Ovary (tissue), 10 donors: ENCODE measurements at regions of chr19 and their contacts with region 1.

Region 1: DNA sequence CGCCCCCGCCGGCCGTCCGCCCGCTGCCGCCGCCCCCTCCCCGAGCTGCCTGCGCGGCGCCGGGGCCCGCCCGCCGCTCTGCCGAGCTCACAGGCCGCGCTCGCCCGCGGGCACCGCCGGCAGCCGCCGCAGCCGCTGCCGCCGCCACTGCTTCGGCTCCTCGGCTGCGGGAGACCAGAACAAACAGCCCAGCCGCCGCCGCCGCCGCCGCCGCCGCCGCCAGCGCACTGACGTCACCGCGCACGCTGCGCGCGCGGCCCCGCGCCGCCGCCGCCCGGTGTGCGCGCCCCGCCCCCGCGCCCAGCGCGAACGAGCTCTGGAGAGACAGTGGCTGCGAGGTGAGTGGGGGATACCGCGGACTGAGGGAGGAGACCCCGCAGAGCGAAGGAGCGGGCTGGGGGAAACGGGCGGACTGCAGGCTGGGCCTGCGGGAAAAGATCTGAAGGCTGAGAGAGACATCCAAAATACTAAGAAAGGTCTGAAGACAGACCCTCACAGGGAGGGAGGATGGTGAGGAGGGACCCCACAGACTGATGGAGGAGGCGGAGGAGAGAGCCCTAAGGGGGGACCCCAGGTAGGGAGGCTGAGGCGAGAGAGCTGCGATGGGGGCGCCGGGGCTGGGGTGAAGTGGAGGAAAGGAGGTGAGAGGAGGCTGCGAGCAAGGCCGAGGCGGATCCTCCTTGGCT is at the start of gene BRD4:
- DNase-seq: peak; percentile 70 to 87 (median 81)
- H3K4me3 ChIP-seq: peak within 1 kb of the TSS; percentile 68
- H3K27ac ChIP-seq: peak within 1 kb of the TSS; percentile 91 to 99
- H3K4me1 ChIP-seq: peaks cover 14% of the 10 kb centered on the region
- H3K27me3 ChIP-seq: no peaks in the 10 kb centered on the region
- CTCF ChIP-seq: no peak
- EP300 ChIP-seq: no peak
- POLR2A ChIP-seq: no peak
- total RNA-seq, gene BRD4: 19.6 to 127 (median 100) TPM

Region 2: DNA sequence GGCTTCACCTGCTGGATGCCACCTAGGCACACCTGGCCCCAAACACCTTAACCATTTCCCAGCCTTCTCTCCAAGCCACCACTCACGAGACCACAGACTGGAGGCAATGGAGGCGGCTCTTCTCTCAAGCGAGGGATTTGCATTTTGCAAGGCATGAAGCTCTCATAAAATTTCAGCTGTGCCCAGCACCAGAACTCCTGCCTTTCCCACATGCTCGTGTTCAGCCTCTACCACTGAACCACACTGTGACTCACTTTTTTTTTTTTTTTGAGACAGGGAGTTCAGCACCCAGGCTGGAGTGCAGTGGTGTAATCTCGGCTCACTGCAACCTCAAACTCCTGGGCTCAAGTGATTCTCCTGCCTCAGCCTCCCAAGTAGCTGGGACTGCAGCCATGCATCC is 1444.9 kb before region 1 on chr19:
- intact Hi-C with region 1: no loop called
- DNase-seq: no peak
- H3K4me3 ChIP-seq: no peak overlapping the region
- H3K27ac ChIP-seq: no peak overlapping the region
- H3K4me1 ChIP-seq: peaks cover 4% of the 10 kb centered on the region
- H3K27me3 ChIP-seq: no peaks in the 10 kb centered on the region
- CTCF ChIP-seq: no peak
- EP300 ChIP-seq: no peak
- POLR2A ChIP-seq: no peak

Region 3: GRCh38 chr19:15280915-15281683 is 51.4 kb before region 1 on chr19:
- intact Hi-C with region 1: loop called in 1 of 4 experiments (anchors 10 kb)
- DNase-seq: peak; percentile 78 to 85 (median 80)
- H3K4me3 ChIP-seq: no peak overlapping the region
- H3K27ac ChIP-seq: peak overlapping the region in 1 of 2 donors; percentile 22
- H3K4me1 ChIP-seq: peaks cover 63% of the 10 kb centered on the region
- H3K27me3 ChIP-seq: no peaks in the 10 kb centered on the region
- CTCF ChIP-seq: no peak
- EP300 ChIP-seq: no peak
- POLR2A ChIP-seq: no peak

Region 4: GRCh38 chr19:15379083-15379995 is 46.9 kb after region 1 on chr19 and contains the start of gene AKAP8:
- intact Hi-C with region 1: loop called in 1 of 4 experiments (anchors 1 kb)
- DNase-seq: peak; percentile 98 to 99 (median 98)
- H3K4me3 ChIP-seq: peak within 1 kb of the TSS; percentile 97
- H3K27ac ChIP-seq: peak within 1 kb of the TSS; percentile 82 to 97
- H3K4me1 ChIP-seq: peaks cover 20% of the 10 kb centered on the region
- H3K27me3 ChIP-seq: no peaks in the 10 kb centered on the region
- CTCF ChIP-seq: no peak
- EP300 ChIP-seq: no peak
- POLR2A ChIP-seq: peak; percentile 91
- total RNA-seq, gene AKAP8: 19.1 to 53.3 (median 46.4) TPM

Region 5: GRCh38 chr19:15418588-15419412 is 86.3 kb after region 1 on chr19 and contains the start of gene AKAP8L:
- intact Hi-C with region 1: loop called in 1 of 4 experiments (anchors 5 kb)
- DNase-seq: peak; percentile 97 to 99 (median 98)
- H3K4me3 ChIP-seq: peak within 1 kb of the TSS; percentile 99
- H3K27ac ChIP-seq: peak within 1 kb of the TSS; percentile 22 to 67
- H3K4me1 ChIP-seq: peaks cover 25% of the 10 kb centered on the region
- H3K27me3 ChIP-seq: no peaks in the 10 kb centered on the region
- CTCF ChIP-seq: peak; percentile 37 to 56 (median 49)
- EP300 ChIP-seq: no peak
- POLR2A ChIP-seq: peak; percentile 83
- total RNA-seq, gene AKAP8L: 85.9 to 121 (median 93.2) TPM